Dendritic cell treated with granulocyte-macrophage colony-stimulating factor and Interleukin-4, amounts not matched to agents 40 ng/mL and 50 ng/mL, for 4 days (primary cell): ENCODE measurements at regions of chr2 and their contacts with region 1.

Region 1: GRCh38 chr2:25376750-25377621 is 35.3 kb upstream of the DNMT3A start:
- H3K4me3 Mint-ChIP-seq: peak overlapping the region; percentile 30
- H3K27ac Mint-ChIP-seq: peak overlapping the region; percentile 30
- H3K4me1 Mint-ChIP-seq: peaks cover 46% of the 10 kb centered on the region
- H3K27me3 Mint-ChIP-seq: peaks cover 24% of the 10 kb centered on the region

Region 2: GRCh38 chr2:25257032-25257552 is 119.9 kb before region 1 on chr2:
- intact Hi-C with region 1: no loop called
- H3K4me3 Mint-ChIP-seq: no peak overlapping the region
- H3K27ac Mint-ChIP-seq: no peak overlapping the region
- H3K4me1 Mint-ChIP-seq: peaks cover 32% of the 10 kb centered on the region
- H3K27me3 Mint-ChIP-seq: peaks cover 7% of the 10 kb centered on the region

Region 3: GRCh38 chr2:25342372-25343186 is 34.4 kb before region 1 on chr2:
- intact Hi-C with region 1: loop called (anchors 5 kb)
- H3K4me3 Mint-ChIP-seq: peak overlapping the region; percentile 83
- H3K27ac Mint-ChIP-seq: peak overlapping the region; percentile 83
- H3K4me1 Mint-ChIP-seq: peaks cover 34% of the 10 kb centered on the region
- H3K27me3 Mint-ChIP-seq: peaks cover 21% of the 10 kb centered on the region

Region 4: DNA sequence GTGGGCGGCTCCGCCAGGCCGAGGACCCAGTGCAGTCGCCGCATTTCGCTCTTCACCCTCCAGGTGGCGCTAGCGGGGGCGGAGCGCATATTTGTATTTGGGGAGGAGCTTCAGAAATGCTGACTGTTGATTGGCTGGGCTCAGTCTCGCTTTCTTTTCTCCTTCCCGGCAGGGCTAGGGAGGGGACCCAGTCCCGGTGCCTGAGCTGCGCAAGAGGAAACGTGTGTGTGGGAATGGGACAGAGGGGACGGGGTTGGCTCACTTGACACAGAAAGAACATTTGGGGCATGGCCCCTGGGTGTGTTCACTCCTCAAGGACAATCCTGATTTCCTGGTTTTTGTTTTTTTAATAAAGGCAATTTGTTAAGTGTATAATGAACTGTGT is 14.9 kb before region 1 on chr2:
- intact Hi-C with region 1: loop called (anchors 2 kb)
- H3K4me3 Mint-ChIP-seq: peak overlapping the region; percentile 70
- H3K27ac Mint-ChIP-seq: peak overlapping the region; percentile 87
- H3K4me1 Mint-ChIP-seq: peaks cover 35% of the 10 kb centered on the region
- H3K27me3 Mint-ChIP-seq: peaks cover 12% of the 10 kb centered on the region

Region 5: GRCh38 chr2:25514043-25514637 is 137.2 kb after region 1 on chr2:
- intact Hi-C with region 1: loop called (anchors 10 kb)
- H3K4me3 Mint-ChIP-seq: no peak overlapping the region
- H3K27ac Mint-ChIP-seq: no peak overlapping the region
- H3K4me1 Mint-ChIP-seq: peaks cover 33% of the 10 kb centered on the region
- H3K27me3 Mint-ChIP-seq: peaks cover 2% of the 10 kb centered on the region

Region 6: GRCh38 chr2:25567406-25567805 is 190.4 kb after region 1 on chr2:
- intact Hi-C with region 1: loop called (anchors 2 kb)
- H3K4me3 Mint-ChIP-seq: no peak overlapping the region
- H3K27ac Mint-ChIP-seq: peak overlapping the region; percentile 85
- H3K4me1 Mint-ChIP-seq: peaks cover 41% of the 10 kb centered on the region
- H3K27me3 Mint-ChIP-seq: no peaks in the 10 kb centered on the region

Region 7: GRCh38 chr2:25740810-25741381 is 363.9 kb after region 1 on chr2:
- intact Hi-C with region 1: no loop called
- H3K4me3 Mint-ChIP-seq: no peak overlapping the region
- H3K27ac Mint-ChIP-seq: no peak overlapping the region
- H3K4me1 Mint-ChIP-seq: peaks cover 41% of the 10 kb centered on the region
- H3K27me3 Mint-ChIP-seq: no peaks in the 10 kb centered on the region